ENCODE measurements at regions of chr20 and their contacts with region 1.

Region 1: DNA sequence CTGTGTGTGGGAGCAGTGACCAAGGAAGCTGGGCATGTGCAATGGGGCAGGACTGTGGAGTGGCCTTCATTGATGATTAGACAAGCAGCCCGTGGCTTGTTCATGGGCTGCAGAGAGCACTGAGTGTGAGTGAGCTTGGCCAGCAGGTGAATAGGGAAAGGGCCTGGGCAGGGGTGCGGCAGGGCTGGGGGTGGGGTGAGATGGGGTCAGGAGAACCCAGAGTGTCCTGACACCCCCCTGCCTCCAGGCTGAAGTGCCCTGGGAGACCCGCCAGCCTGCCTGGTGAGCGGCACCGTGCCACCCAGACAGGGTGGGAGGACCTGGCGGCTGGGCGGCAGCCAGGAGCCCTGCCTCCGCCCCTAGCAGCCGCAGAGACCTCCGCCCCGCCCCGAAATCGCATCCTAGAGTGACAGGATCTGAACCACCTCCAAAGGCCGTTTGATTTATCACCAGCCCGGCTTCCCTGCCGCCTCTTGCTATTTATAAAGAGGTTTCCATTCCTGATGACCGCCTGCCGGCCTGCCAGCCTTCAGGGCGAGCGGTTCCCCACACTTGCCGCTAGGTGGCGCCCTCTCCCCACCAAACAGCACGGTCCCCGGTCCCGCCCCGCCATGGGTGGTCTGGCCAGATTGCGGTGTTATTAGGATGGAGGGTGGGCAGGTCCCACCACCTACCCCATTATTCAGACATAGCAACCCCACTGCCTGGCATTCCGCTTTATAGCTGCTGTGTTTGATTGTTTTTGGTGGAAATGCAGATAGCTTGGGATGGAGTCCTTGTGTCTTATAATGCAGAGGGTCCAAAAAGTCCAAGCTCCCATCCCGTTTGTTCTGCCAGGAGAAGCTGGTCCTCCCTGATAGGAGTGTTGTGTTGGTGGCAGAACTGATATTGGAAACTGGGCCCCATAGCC is 3.5 kb downstream of the MYLK2 start:
- DNase-seq: peak; percentile 73
- H3K4me3 ChIP-seq: peak overlapping the region in 1 of 4 donors; percentile 12
- H3K27ac ChIP-seq: no peak overlapping the region
- H3K4me1 ChIP-seq: peaks cover 0 to 9% (median 4%) of the 10 kb centered on the region in 4 donors
- H3K27me3 ChIP-seq: no peaks in the 10 kb centered on the region
- CTCF ChIP-seq: peak; percentile 96 to 99 (median 98)
- EP300 ChIP-seq: no peak
- POLR2A ChIP-seq: no peak

Region 2: GRCh38 chr20:31788578-31788977 is 34.1 kb before region 1 on chr20:
- in situ Hi-C with region 1: no loop called
- intact Hi-C with region 1: loop called (anchors 1 kb)
- DNase-seq: no peak
- H3K4me3 ChIP-seq: no peak overlapping the region
- H3K27ac ChIP-seq: no peak overlapping the region
- H3K4me1 ChIP-seq: no peaks in the 10 kb centered on the region
- H3K27me3 ChIP-seq: no peaks in the 10 kb centered on the region
- CTCF ChIP-seq: no peak
- EP300 ChIP-seq: no peak
- POLR2A ChIP-seq: no peak

Region 3: DNA sequence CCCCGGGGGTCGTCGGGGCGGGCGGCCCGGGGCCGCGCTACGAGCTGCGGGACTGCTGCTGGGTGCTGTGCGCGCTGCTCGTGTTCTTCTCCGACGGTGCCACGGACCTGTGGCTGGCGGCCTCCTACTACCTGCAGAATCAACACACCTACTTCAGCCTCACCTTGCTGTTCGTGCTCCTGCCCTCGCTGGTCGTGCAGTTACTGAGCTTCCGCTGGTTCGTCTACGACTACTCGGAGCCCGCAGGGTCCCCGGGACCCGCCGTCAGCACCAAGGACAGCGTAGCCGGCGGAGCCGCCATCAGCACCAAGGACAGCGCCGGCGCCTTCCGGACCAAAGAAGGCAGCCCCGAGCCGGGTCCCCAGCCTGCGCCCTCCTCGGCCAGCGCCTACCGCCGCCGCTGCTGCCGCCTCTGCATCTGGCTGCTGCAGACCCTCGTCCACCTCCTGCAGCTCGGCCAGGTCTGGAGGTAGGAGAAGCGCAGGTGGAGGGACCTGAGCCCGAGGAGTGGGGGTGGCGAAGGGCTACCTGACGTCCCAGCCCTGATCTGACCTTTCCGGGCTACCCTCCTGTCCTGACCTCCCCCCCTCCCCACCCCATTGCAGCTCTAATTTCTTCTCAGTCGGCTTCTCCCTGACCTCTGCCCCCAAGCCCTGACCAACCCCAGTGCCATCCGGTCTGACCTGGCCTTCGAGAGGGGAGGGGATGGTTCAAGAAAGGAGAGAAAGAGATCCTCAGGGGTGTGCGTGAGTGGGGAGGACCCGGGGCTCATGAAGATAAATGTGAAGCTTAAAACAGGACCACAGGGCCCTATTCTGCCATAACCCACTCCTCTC is 145.8 kb after region 1 on chr20:
- in situ Hi-C with region 1: no loop called
- intact Hi-C with region 1: no loop called
- DNase-seq: peak; percentile 56
- H3K4me3 ChIP-seq: no peak overlapping the region
- H3K27ac ChIP-seq: no peak overlapping the region
- H3K4me1 ChIP-seq: peaks cover 0 to 4% (median 0%) of the 10 kb centered on the region in 4 donors
- H3K27me3 ChIP-seq: peaks cover 59% of the 10 kb centered on the region
- CTCF ChIP-seq: no peak
- EP300 ChIP-seq: no peak
- POLR2A ChIP-seq: no peak

Region 4: DNA sequence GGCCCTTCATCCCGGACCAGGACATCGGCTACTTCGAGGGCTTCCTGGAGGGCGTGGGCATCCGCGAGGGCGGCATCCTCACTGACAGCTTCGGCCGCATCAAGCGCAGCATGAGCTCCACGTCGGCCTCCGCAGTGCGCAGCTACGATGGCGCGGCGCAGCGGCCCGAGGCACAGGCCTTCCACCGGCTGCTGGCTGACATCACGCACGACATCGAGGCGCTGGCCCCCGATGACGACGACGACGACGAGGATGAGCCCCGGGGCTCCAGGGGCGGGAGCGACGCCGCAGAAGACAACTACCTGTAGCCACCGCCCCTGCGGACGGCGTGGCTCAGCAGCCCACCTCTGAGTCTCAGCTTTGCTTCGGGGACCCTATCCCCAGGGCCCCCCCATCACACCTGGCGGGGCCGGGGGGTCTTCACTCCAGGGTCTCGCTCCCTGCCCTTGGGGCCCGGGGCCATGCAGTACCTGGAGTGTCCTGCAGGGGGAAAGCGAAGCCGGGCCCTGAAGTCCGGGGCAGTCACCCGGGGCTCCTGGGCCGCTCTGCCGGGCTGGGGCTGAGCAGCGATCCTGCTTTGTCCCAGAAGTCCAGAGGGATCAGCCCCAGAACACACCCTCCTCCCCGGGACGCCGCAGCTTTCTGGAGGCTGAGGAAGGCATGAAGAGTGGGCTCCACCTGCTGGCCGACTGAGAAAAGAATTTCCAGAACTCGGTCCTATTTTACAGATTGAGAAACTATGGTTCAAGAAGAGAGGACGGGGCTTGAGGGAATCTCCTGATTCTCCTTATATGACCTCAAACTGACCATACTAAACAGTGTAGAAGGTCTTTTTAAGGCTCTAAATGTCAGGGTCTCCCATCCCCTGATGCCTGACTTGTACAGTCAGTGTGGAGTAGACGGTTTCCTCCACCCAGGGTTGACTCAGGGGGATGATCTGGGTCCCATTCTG is 208.6 kb after region 1 on chr20:
- in situ Hi-C with region 1: no loop called
- intact Hi-C with region 1: loop called (anchors 10 kb)
- DNase-seq: peak; percentile 75
- H3K4me3 ChIP-seq: peak overlapping the region in 2 of 4 donors; percentile 13 to 38
- H3K27ac ChIP-seq: no peak overlapping the region
- H3K4me1 ChIP-seq: peaks cover 0 to 12% (median 8%) of the 10 kb centered on the region in 4 donors
- H3K27me3 ChIP-seq: peaks cover 64% of the 10 kb centered on the region
- CTCF ChIP-seq: peak; percentile 89 to 96 (median 94)
- EP300 ChIP-seq: no peak
- POLR2A ChIP-seq: no peak

Region 5: DNA sequence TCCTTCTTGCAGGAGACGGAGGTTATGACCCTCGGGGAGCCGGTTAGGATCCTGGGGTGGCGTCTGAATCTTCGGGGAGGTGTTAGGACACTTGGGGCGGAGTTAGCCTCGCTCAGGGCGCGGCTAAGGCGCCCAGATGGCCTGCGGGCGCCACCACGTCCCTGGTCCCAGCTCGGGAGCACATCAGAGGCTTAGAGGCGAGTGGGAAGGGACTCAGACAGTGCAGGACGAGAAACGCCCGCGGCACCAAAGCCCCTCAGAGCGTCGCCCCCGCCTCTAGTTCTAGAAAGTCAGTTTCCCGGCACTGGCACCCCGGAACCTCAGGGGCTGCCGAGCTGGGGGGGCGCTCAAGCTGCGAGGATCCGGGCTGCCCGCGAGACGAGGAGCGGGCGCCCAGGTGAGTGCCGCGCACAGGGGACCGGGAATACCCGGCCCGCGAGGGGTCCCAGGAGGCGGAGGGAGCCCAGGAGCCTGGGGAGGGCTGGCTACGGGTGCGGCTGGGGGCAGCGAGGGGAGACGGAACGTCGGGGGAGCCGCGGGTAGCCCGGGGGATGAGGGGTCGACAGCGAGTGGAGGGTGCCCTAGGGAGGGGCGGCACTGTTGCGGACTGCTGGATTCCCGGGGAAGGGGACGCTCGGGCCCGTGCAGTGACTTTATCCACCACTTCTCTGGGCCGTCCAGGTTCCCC is 229.6 kb after region 1 on chr20 and contains the start of gene HCK:
- in situ Hi-C with region 1: no loop called
- intact Hi-C with region 1: no loop called
- DNase-seq: peak; percentile 30
- H3K4me3 ChIP-seq: peak within 1 kb of the TSS in 3 of 4 donors; percentile 16 to 52 (median 37)
- H3K27ac ChIP-seq: peak within 1 kb of the TSS; percentile 56 to 77 (median 69)
- H3K4me1 ChIP-seq: peaks cover 0 to 17% (median 9%) of the 10 kb centered on the region in 4 donors
- H3K27me3 ChIP-seq: peaks cover 79% of the 10 kb centered on the region
- CTCF ChIP-seq: no peak
- EP300 ChIP-seq: no peak
- POLR2A ChIP-seq: peak; percentile 33
- total RNA-seq, gene HCK: 9.7 to 22.7 (median 11.7) TPM

Region 6: DNA sequence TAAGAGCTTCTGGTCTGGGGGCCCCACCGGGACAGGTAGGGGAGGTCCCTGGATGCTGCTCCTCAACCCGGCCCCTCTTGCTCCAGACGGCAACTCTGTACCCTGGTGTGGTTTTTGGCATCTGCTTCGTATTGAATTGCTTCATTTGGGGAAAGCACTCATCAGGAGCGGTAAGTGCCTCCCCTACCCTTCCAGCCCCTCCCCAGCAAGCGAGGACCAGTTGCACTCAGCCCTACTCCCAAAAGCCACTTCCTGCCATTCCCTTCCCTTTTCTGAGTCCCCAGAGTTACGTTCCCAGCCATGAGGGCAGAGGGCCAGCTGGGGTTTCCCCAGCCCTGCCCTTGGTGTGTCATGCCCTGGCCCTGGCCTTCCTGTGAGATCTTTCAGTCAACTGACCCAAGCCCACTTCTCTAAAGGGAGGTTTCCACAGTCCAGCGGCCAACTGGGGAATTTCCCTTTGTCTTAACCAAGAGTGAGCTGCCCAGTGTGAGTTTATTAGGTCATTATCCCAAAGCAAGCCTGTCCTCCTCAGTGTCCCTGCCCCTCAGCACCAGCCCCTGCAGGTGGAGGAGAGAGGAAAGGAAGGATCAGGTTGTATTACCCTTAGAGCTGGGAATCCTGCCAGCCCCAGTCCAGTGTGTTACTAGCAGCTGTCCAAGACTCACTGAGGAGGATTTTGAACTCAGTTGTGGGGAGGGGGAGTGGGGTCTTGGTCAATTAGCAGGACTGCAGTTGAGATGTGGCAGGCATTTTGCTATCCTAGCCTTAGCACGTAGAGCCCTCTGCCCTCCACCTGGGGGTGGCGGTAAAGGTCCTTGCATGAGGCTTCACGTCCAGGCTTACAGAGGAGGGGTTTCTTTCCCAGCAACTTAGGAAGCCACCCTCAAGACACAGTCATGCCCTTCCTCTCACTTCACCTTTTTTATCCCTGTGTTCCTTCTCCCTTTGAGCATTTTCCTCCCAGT is 332.6 kb after region 1 on chr20:
- in situ Hi-C with region 1: no loop called
- intact Hi-C with region 1: no loop called
- DNase-seq: peak; percentile 67
- H3K4me3 ChIP-seq: no peak overlapping the region
- H3K27ac ChIP-seq: peak overlapping the region in 3 of 4 donors; percentile 4 to 43 (median 15)
- H3K4me1 ChIP-seq: peaks cover 0 to 13% (median 7%) of the 10 kb centered on the region in 4 donors
- H3K27me3 ChIP-seq: no peaks in the 10 kb centered on the region
- CTCF ChIP-seq: peak in 3 of 5 experiments; percentile 11 to 27 (median 26)
- EP300 ChIP-seq: no peak
- POLR2A ChIP-seq: no peak